ENCODE measurements at regions of chr10 and their contacts with region 1.

Region 1: GRCh38 chr10:104121520-104122224 is at the start of gene SFR1:
- DNase-seq: peak; percentile 97 to 99
- ATAC-seq: peak; percentile 87
- H3K4me3 ChIP-seq: peak within 1 kb of the TSS; percentile 64 to 86 (median 80)
- H3K27ac ChIP-seq: peak within 1 kb of the TSS; percentile 90 to 99 (median 94)
- H3K4me1 ChIP-seq: peaks cover 7% of the 10 kb centered on the region in 2 donors
- H3K27me3 ChIP-seq: no peaks in the 10 kb centered on the region
- CTCF ChIP-seq: peak; percentile 30 to 73 (median 59)
- POLR2A ChIP-seq: peak; percentile 64 to 84
- total RNA-seq, gene SFR1: 2.4 to 7.7 (median 4.7) TPM

Region 2: GRCh38 chr10:103895411-103896186 is 226.1 kb before region 1 on chr10:
- in situ Hi-C with region 1: loop called in 2 of 4 experiments (anchors 10 to 25 kb)
- intact Hi-C with region 1: no loop called
- DNase-seq: no peak
- ATAC-seq: peak; percentile 16 to 51
- H3K4me3 ChIP-seq: no peak overlapping the region
- H3K27ac ChIP-seq: peak overlapping the region; percentile 69 to 78 (median 74)
- H3K4me1 ChIP-seq: peaks cover 21 to 38% of the 10 kb centered on the region in 2 donors
- H3K27me3 ChIP-seq: no peaks in the 10 kb centered on the region
- CTCF ChIP-seq: no peak
- POLR2A ChIP-seq: no peak

Region 3: DNA sequence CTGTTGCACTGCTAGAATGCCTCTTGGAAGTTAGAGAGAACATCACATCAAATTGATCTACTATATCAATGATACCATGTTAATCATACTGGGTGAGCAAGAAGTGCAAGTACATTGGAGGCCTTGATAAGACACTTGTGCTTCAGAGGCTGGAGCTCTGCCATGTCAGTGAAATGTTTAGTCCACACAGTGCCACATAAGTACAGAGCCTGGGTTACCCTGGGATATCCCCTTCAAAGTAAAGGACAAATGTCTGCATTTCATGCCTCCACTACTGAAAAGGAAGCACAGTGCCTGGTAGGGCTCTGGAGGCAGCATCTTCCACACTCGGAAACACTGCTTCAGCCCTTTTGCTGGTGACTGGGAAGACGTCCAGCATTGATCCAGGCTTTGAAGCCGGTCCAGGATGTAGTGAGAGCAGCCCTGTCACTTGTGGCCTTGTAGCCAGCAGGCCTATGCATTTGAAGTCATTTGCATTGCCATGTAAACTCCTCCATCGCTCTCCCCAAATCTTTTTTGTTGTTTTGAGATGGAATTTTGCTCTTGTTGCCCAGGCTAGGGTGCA is 188.0 kb before region 1 on chr10:
- in situ Hi-C with region 1: loop called in 1 of 4 experiments (anchors 25 kb)
- intact Hi-C with region 1: no loop called
- DNase-seq: no peak
- ATAC-seq: no peak
- H3K4me3 ChIP-seq: no peak overlapping the region
- H3K27ac ChIP-seq: no peak overlapping the region
- H3K4me1 ChIP-seq: no peaks in the 10 kb centered on the region
- H3K27me3 ChIP-seq: no peaks in the 10 kb centered on the region
- CTCF ChIP-seq: no peak
- POLR2A ChIP-seq: no peak

Region 4: GRCh38 chr10:104254493-104255310 is 133.0 kb after region 1 on chr10 and contains the start of gene GSTO1:
- in situ Hi-C with region 1: no loop called
- intact Hi-C with region 1: loop called (anchors 5 kb)
- DNase-seq: peak; percentile 65 to 74
- ATAC-seq: peak; percentile 68
- H3K4me3 ChIP-seq: peak within 1 kb of the TSS; percentile 75 to 87 (median 82)
- H3K27ac ChIP-seq: peak within 1 kb of the TSS; percentile 89 to 96 (median 94)
- H3K4me1 ChIP-seq: peaks cover 27 to 32% of the 10 kb centered on the region in 2 donors
- H3K27me3 ChIP-seq: no peaks in the 10 kb centered on the region
- CTCF ChIP-seq: peak in 1 of 5 experiments; percentile 16
- POLR2A ChIP-seq: peak; percentile 64 to 71
- total RNA-seq, gene GSTO1: 39.6 to 284 (median 74.2) TPM